A549 (cell line): ENCODE measurements at regions of chr5 and their contacts with region 1.

Region 1: GRCh38 chr5:172984243-172984953 is 827 bp downstream of the ATP6V0E1 start:
- DNase-seq: peak; percentile 69 to 77
- ATAC-seq: peak; percentile 78 to 82
- H3K4me3 ChIP-seq: peak overlapping the region; percentile 87
- H3K27ac ChIP-seq: peak overlapping the region; percentile 83 to 95
- H3K4me1 ChIP-seq: peaks cover 13% of the 10 kb centered on the region; the same call in 1 of the 3 replicates
- CTCF ChIP-seq: no peak
- EP300 ChIP-seq: no peak
- POLR2A ChIP-seq: no peak
- RAD21 ChIP-seq: peak; percentile 23 to 29; a peak in 4 of 5 replicates

Region 2: GRCh38 chr5:172973127-172973916 is 11.1 kb before region 1 on chr5:
- CTCF ChIA-PET with region 1: interaction called, 10 read pairs
- POLR2A ChIA-PET with region 1: no interaction called
- DNase-seq: no peak
- ATAC-seq: no peak
- H3K4me3 ChIP-seq: no peak overlapping the region
- H3K27ac ChIP-seq: no peak overlapping the region
- H3K4me1 ChIP-seq: no peaks in the 10 kb centered on the region
- CTCF ChIP-seq: no peak
- EP300 ChIP-seq: no peak
- POLR2A ChIP-seq: no peak
- RAD21 ChIP-seq: no peak

Region 3: DNA sequence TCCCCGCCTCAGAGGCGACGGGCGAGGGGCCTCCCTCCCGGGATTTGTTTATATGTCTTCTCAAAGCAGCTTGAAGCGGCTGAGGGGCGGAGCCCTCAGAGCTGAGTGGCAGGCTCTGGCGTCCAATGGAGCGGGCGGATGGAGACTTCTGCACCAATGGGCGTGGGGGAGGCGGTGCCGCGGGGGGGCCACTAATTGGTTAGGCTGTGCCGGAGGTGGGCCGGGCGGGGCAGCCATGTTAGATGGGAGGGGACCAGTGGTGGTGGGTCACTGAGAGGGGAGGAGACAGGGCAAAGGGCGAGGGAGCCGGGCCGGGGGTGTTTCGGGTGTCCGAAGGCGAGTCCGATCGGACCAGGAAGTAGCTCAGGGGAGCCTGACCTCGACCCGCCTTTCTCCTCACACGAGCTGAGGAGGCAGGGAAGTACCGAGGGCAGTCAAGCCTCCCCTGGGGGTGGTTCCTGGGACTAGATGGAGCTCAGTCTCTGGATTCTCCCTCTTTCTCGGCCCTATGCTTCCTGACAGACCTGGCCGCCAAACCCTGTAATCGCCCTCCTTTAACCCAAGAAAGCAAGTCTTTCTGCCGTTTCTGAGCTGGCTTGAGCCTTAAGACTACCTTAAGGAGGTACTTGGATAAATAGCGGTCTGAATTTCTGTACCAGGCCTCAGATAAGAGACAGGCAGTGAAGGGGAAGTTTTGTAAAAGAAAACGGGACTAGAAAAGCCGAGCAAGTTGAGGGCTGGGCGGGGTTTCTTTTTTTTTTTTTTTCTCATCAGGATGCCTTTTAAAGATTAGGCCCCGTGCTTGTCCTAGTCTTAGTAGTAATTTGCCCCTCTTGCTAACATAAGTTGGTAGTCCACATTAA is 72.9 kb after region 1 on chr5:
- CTCF ChIA-PET with region 1: interaction called, 7 read pairs
- POLR2A ChIA-PET with region 1: interaction called, 11 read pairs
- DNase-seq: peak; percentile 99
- ATAC-seq: peak; percentile 89 to 93
- H3K4me3 ChIP-seq: peak overlapping the region; percentile 93
- H3K27ac ChIP-seq: peak overlapping the region; percentile 86 to 90
- H3K4me1 ChIP-seq: peaks cover 17% of the 10 kb centered on the region; the same call in 2 of the 3 replicates
- CTCF ChIP-seq: no peak
- EP300 ChIP-seq: no peak
- POLR2A ChIP-seq: peak; percentile 60
- RAD21 ChIP-seq: no peak

Region 4: GRCh38 chr5:173144200-173145176 is 160.1 kb after region 1 on chr5 and contains the start of gene BNIP1:
- CTCF ChIA-PET with region 1: interaction called, 17 read pairs
- POLR2A ChIA-PET with region 1: interaction called, 4 read pairs
- DNase-seq: peak; percentile 94 to 95
- ATAC-seq: peak; percentile 96 to 97
- H3K4me3 ChIP-seq: peak within 1 kb of the TSS; percentile 71
- H3K27ac ChIP-seq: peak within 1 kb of the TSS; percentile 86 to 88
- H3K4me1 ChIP-seq: no peaks in the 10 kb centered on the region
- CTCF ChIP-seq: peak; percentile 95
- EP300 ChIP-seq: no peak
- POLR2A ChIP-seq: peak; percentile 40
- RAD21 ChIP-seq: peak; percentile 48 to 63
- polyA plus RNA-seq, gene BNIP1: 22.1 and 26.7 TPM in 2 replicates

Region 5: DNA sequence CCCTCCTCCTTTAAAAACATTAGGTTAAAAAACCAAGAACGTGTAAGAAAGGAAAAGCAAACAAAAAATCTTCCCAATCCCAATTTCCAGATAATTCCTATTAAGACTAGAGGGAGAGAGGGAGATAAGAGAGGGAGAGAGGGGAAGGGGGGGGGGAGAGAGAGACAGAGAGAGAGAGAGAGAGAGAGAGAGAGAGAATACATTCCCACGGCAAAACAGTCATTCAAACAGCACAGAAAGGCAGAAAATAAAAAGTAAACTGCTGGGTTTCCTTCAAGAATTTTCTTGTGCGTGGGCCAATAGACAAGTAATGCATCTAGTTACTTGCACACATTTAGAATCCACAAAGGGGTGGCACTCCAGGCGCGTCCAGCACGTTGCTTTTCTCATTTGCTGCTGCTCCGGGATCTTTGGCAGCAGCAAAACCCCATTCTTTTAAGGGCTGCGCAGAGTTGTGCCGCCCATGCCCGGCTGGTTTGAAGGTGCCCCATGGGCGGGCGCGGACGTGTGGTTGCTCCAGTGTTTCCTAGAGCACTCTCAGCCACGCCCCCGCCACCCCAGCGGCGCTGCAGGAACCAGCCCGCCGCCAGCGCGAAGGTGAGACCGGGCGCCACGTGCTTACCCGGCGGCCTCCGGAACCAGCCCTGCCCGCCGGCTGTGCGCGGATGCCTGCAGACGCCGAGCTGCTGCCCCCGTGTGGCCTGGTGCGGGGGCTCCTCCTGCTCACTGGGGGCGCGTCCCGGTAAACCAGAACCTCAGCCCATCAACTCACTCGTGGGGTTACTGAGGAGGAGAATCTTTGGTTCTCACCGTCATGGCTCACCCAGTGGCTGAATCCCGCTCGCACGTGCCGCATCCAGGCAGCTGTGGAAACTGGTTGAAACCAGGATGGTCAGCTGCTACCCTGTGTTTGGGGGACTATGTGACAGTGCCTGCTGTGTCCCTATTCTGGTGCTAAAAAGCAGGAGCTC is 299.2 kb after region 1 on chr5:
- CTCF ChIA-PET with region 1: interaction called, 10 read pairs
- POLR2A ChIA-PET with region 1: no interaction called
- DNase-seq: peak; percentile 80 to 82
- ATAC-seq: peak; percentile 94 to 98
- H3K4me3 ChIP-seq: peak overlapping the region; percentile 34
- H3K27ac ChIP-seq: peak overlapping the region; percentile 69 to 79
- H3K4me1 ChIP-seq: peaks cover 4% of the 10 kb centered on the region; the same call in 1 of the 3 replicates
- CTCF ChIP-seq: peak; percentile 78
- EP300 ChIP-seq: no peak
- POLR2A ChIP-seq: no peak
- RAD21 ChIP-seq: peak; percentile 69 to 82

Region 6: GRCh38 chr5:173338380-173339015 is 354.1 kb after region 1 on chr5:
- CTCF ChIA-PET with region 1: no interaction called
- POLR2A ChIA-PET with region 1: no interaction called
- DNase-seq: no peak
- ATAC-seq: no peak
- H3K4me3 ChIP-seq: no peak overlapping the region
- H3K27ac ChIP-seq: no peak overlapping the region
- H3K4me1 ChIP-seq: peaks cover 11% of the 10 kb centered on the region; the same call in 2 of the 3 replicates
- CTCF ChIP-seq: no peak
- EP300 ChIP-seq: no peak
- POLR2A ChIP-seq: no peak
- RAD21 ChIP-seq: no peak

Region 7: DNA sequence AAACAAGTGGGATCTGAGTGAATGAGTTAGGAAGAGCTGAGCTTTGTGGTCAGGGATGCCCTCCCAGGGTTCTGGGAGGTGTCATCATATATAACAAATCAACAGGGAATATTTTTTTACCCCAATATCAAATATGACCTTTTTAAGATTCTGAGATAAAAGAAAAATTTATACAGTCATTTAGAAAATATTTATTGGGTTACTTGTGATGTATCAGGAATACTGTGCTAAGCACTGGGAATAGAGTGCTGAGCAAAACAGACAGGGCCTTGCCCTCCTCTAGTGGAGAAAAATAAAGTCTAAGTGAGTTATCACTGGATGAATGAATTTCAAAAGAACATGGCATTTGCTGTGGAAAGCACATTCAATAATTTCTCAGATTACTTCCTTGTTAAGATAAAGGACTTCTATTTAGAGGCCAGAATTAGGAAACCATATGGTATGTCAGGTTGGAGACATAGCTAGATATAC is 529.2 kb after region 1 on chr5:
- CTCF ChIA-PET with region 1: no interaction called
- POLR2A ChIA-PET with region 1: no interaction called
- DNase-seq: peak in 1 of 2 experiments; percentile 9
- ATAC-seq: 0 out of 6 replicates have a peak, but pooled peaks have one; percentile 33 to 54
- H3K4me3 ChIP-seq: no peak overlapping the region
- H3K27ac ChIP-seq: no peak overlapping the region
- H3K4me1 ChIP-seq: no peaks in the 10 kb centered on the region; the same call in 2 of the 3 replicates
- CTCF ChIP-seq: no peak
- EP300 ChIP-seq: no peak
- POLR2A ChIP-seq: no peak
- RAD21 ChIP-seq: no peak